Naive thymus-derived CD4-positive, alpha-beta T cell (primary cell): ENCODE measurements at regions of chr11 and their contacts with region 1.

Region 1: DNA sequence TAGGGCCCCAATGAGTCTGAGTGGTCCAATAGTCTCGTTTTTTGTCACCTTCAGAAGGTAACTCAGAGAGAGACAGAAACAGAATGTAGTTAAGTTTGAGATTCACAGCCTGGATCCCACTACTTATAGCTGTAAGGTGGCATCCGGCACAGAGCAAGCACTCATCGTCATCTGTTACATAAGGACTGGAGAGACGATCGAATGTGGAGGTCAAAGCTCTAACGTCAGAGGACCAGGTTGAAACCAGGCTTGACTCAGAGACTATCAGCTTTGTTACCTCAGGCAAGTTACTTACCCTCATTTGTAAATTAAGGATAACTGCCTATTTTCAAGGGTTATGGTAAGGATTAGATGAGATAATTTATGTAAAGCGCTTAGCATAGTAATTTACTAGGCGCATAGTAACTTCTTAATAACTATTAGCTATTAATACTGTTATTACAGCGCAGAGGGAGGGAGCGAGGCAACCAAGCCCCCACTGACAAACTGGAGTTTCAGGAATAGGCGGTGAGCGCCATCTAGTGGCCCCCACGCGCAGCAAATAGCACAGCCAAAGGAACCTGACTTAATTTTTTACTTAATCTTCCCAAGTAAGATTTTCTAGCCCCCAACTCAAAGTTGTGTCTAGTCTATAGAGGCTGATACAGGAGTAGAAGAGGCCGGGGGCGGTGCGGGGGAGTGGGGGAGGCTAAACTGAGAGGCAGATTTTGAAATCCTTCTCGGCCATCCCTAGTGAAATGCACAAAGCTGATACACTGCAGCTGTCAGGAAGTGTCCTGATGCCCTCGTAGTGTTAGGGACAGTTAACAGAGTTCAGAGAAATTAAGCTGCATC is 29.0 kb upstream of the API5 start:
- DNase-seq: peak in 7 of 9 donors; percentile 10 to 45 (median 19)
- ATAC-seq: no peak
- H3K4me3 ChIP-seq: no peak overlapping the region
- H3K4me3 Mint-ChIP-seq: no peak overlapping the region
- H3K27ac ChIP-seq: no peak overlapping the region
- H3K27ac Mint-ChIP-seq: no peak overlapping the region
- H3K4me1 ChIP-seq: no peaks in the 10 kb centered on the region
- H3K4me1 Mint-ChIP-seq: no peaks in the 10 kb centered on the region
- H3K27me3 ChIP-seq: no peaks in the 10 kb centered on the region
- H3K27me3 Mint-ChIP-seq: peaks cover 0 to 30% (median 21%) of the 10 kb centered on the region in 5 donors

Region 2: DNA sequence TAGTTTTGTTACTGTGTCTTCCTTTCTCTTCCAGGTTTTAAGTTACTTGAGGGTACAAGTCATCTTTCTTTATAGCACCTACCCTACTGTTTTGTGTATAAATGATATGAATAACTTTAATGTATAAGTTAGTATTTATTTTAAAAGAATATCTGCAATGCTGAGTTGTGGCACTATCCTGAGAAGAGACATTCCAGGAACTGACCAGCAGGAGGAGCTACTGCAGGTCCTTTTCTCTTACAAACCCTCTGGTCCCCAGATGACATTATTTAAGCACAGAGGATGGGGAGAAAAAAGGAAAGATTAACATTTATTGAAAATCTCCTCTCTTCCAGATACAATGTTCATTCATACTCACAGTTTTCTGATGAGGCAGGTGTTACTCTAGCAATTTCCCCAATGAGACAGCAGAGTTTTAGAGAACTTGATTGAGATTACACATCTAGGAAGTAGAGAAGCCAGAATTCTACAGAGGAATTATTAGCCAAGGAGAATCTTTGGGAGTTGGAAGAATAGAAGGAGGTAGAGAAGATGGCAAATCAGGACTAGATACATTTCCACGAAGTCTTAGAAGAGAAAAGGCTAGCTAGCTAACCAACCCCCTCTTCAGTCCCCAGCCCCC is 512.3 kb before region 1 on chr11:
- CTCF ChIA-PET with region 1: no interaction called
- POLR2A ChIA-PET with region 1: no interaction called
- intact Hi-C with region 1: loop called (anchors 1 to 5 kb)
- DNase-seq: no peak
- ATAC-seq: no peak
- H3K4me3 ChIP-seq: no peak overlapping the region
- H3K4me3 Mint-ChIP-seq: no peak overlapping the region
- H3K27ac ChIP-seq: no peak overlapping the region
- H3K27ac Mint-ChIP-seq: no peak overlapping the region
- H3K4me1 ChIP-seq: no peaks in the 10 kb centered on the region
- H3K4me1 Mint-ChIP-seq: no peaks in the 10 kb centered on the region
- H3K27me3 ChIP-seq: no peaks in the 10 kb centered on the region
- H3K27me3 Mint-ChIP-seq: no peaks in the 10 kb centered on the region

Region 3: GRCh38 chr11:43419460-43419859 is 136.6 kb after region 1 on chr11:
- CTCF ChIA-PET with region 1: no interaction called
- POLR2A ChIA-PET with region 1: no interaction called
- intact Hi-C with region 1: loop called in 1 of 2 experiments (anchors 1 kb)
- DNase-seq: peak in 6 of 9 donors; percentile 1 to 23 (median 8)
- ATAC-seq: no peak
- H3K4me3 ChIP-seq: no peak overlapping the region
- H3K4me3 Mint-ChIP-seq: no peak overlapping the region
- H3K27ac ChIP-seq: no peak overlapping the region
- H3K27ac Mint-ChIP-seq: no peak overlapping the region
- H3K4me1 ChIP-seq: no peaks in the 10 kb centered on the region
- H3K4me1 Mint-ChIP-seq: peaks cover 0 to 3% (median 0%) of the 10 kb centered on the region in 7 donors
- H3K27me3 ChIP-seq: no peaks in the 10 kb centered on the region
- H3K27me3 Mint-ChIP-seq: no peaks in the 10 kb centered on the region